ENCODE measurements at regions of chr11 and their contacts with region 1.

Region 1: DNA sequence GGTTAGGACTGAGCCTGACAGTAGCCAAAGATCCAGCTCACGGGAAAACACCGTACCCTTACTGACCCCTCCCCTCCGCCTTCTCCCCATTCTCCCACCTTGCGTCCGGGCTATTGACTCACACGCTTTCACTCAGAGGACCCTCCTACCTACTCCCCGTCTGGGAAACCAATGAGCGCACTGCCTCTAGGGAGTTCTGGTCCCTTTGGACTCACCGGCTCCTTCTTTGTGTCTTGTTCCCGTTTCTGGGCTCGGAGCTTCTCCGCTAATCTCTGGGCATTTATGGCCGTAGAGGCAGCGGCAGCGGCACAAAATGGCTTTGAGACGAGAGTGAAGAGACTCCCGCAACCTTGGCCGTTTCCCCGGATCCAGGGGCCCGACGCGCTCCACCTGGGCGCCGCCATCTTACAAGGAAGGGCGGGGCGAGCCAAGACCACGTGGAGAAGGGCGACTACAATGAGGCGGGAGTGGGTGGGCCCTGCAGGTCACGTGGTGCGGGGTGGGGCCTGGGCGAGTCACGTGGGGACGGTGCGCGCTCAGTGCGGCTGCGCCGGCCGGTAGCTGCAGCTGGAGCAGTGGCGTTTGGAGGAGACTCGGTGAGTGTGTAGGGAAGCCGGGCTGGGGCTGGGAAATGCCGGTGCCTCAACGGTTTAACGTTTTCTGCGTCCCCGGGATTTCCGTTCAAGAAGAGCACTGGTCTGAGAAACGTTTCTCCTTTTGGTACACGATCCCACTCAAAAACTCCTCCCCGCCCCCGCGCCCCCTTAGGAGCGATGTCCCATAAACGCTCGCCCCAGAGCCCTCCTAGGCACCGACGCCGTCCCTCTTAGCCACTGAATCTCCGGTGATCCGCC is at the starts of genes FAM118B and RPUSD4:
- H3K4me3 ChIP-seq: peak within 1 kb of the TSS; percentile 89
- H3K27ac ChIP-seq: peak within 1 kb of the TSS; percentile 48; the same call in 1 of the 2 replicates
- H3K4me1 ChIP-seq: no peaks in the 10 kb centered on the region
- CTCF ChIP-seq: no peak

Region 2: DNA sequence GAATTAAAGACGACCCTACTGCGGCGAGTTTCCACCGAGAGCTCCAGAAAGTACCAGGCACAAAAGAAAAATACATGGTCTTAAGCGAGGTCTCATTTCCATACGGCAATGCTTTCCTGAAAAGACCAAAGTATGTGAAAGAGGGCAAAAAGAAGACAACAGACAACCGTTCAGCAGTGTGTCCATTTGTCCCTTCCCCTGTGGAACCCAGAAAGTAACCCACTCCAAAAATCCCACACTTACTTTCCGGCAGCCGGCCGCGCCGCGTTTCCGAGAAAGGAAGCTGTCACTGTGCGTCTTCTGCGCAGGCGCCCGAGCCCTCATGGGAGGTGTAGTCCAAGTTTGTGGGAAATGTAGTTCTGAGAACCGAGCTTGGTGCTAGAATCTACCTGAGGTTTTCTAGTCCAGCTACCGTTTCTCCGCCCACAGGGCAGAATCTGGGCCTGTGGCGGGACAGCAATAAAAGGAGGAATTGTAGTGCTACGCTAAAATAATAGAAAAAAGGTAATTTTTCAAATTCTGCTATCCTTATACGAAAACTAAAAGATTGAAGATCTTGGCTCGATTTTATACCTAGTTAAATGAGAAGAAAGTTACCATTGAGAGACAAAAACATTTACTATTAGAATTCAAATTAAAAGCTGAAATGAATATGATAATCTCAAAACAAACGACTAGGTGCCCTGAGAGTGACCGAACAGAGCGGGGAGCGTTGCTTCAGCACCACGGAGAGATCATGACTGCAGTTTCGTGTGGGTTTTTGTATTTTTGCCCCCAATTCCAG is 308.3 kb before region 1 on chr11 and contains the start of gene PUS3:
- CTCF ChIA-PET with region 1: no interaction called
- POLR2A ChIA-PET with region 1: interaction called, 11 read pairs
- H3K4me3 ChIP-seq: peak within 1 kb of the TSS; percentile 77
- H3K27ac ChIP-seq: no peak within 1 kb of the TSS
- H3K4me1 ChIP-seq: no peaks in the 10 kb centered on the region
- CTCF ChIP-seq: no peak

Region 3: DNA sequence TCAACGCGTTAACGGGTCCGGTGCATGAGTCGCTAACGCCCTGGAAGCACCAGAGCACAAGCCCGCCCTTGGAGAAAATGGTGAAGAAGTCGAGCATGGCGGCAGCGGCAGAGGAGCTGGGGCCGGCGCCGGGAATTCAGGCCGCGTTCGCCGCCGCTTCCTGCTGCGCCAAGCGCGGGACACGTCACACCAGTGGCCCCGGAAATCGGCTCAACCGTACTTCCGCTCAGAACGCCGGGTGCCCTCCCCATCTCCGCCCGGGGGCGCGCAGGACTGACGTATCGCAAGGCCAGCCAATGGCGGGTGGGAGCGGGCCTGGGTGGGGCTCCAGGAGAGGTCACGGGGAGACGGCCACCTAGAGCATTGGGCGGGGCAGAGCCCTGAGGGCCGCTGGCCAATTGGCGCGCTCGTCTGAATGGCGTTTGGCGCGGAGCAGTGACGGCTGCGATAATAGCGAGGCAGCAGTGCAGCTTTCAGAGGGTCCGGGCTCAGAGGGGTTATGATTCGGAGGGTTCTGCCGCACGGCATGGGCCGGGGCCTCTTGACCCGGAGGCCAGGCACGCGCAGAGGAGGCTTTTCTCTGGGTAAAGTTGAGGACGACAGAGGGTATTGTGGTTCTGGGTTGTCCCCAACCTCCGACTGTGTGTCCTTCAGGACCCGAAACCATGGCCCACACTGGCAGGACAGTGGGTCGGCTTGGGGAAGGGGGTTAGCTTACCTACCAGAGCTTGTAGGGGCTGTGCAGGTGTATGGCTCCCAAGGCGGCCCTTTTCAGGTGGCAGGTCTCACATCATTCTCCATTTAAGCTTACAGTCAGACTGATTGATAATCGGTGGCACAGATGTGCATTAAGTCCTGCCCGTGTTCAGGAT is 57.5 kb after region 1 on chr11 and contains the starts of genes FOXRED1 and SRPRA:
- CTCF ChIA-PET with region 1: no interaction called
- POLR2A ChIA-PET with region 1: interaction called, 20 read pairs
- H3K4me3 ChIP-seq: peak within 1 kb of the TSS; percentile 94
- H3K27ac ChIP-seq: peak within 1 kb of the TSS; percentile 65; the same call in 1 of the 2 replicates
- H3K4me1 ChIP-seq: no peaks in the 10 kb centered on the region
- CTCF ChIP-seq: no peak